MCF 10A (cell line): ENCODE measurements at regions of chr2 and their contacts with region 1.

Region 1: GRCh38 chr2:172285010-172285621 is 142.3 kb upstream of the ITGA6 start:
- DNase-seq: peak; percentile 41
- H3K4me3 Mint-ChIP-seq: no peak overlapping the region
- H3K27ac Mint-ChIP-seq: no peak overlapping the region
- H3K4me1 Mint-ChIP-seq: peaks cover 22% of the 10 kb centered on the region
- H3K27me3 Mint-ChIP-seq: no peaks in the 10 kb centered on the region
- CTCF ChIP-seq: no peak

Region 2: DNA sequence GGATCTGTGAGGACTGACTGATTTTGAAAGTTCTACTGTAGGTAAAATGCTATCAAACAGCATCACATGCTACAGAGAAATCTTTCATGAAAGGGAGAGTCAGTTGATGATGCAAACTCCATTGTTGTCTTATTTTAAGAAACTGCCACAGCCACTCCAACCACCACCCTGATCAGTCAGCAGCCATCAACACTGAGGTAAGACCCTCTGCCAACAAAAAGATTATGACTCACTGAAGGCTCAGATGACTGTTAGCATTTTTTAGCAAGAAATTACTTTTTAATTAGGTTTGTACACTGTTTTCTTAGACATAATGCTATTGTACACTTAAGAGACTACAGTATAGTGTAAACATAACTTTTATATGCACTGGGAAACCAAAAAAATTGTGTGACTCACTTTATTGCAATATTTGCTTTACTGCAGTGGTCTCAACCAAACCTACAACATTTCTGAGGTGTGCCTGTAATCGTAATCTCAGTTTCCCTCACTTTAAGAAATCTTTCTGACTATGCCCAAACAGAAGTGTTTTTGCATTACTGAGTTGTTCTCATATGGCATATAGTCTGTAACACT is 894.1 kb before region 1 on chr2:
- CTCF ChIA-PET with region 1: no interaction called
- POLR2A ChIA-PET with region 1: no interaction called
- intact Hi-C with region 1: no loop called
- DNase-seq: peak; percentile 82
- H3K4me3 Mint-ChIP-seq: no peak overlapping the region
- H3K27ac Mint-ChIP-seq: peak overlapping the region; percentile 6
- H3K4me1 Mint-ChIP-seq: peaks cover 18% of the 10 kb centered on the region
- H3K27me3 Mint-ChIP-seq: no peaks in the 10 kb centered on the region
- CTCF ChIP-seq: no peak

Region 3: GRCh38 chr2:172172513-172173173 is 112.5 kb before region 1 on chr2:
- CTCF ChIA-PET with region 1: interaction called, 8 read pairs
- POLR2A ChIA-PET with region 1: interaction called, 3 read pairs
- intact Hi-C with region 1: loop called (anchors 1 kb)
- DNase-seq: peak; percentile 74
- H3K4me3 Mint-ChIP-seq: peak overlapping the region; percentile 66
- H3K27ac Mint-ChIP-seq: no peak overlapping the region
- H3K4me1 Mint-ChIP-seq: no peaks in the 10 kb centered on the region
- H3K27me3 Mint-ChIP-seq: no peaks in the 10 kb centered on the region
- CTCF ChIP-seq: peak; percentile 93